Thyroid gland (tissue), 4 donors: ENCODE measurements at regions of chr14 and their contacts with region 1.

Region 1: DNA sequence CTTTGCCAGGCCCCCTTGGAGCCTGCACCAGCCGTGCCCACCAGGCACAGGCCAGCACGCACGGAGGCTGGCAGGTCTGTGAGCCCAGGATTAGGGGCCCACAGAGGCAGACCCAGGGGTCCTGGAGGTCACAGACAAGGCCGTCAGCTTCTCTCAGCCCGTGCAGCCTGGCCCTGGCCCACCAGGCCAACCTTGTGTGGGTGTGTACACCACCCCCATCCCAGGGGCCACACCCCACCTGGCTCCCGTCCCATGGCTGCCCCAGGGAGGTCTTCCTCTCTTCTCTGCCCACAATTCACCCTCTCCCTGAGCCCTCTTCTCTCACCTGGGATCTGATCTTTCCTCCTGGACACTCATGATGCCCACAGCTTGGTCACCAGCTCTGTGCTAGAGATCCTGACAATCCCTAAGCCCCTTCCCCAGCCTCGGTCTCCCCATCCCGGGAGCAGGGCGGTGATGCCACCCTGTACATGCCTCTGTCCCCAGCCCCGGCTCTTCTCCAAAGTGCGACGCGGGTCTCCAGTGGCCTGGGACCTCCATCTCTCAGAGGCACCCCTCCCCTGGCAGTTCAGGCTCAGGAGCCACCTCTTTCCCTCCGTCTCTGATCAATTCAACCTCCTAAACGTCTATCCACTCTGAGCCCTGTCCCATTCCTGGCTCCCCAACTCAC is 31.1 kb upstream of the GPR132 start:
- DNase-seq: no peak
- H3K4me3 ChIP-seq: no peak overlapping the region
- H3K27ac ChIP-seq: no peak overlapping the region
- H3K4me1 ChIP-seq: peaks cover 25 to 27% of the 10 kb centered on the region in 2 donors
- H3K27me3 ChIP-seq: no peaks in the 10 kb centered on the region
- CTCF ChIP-seq: no peak
- POLR2A ChIP-seq: no peak

Region 2: DNA sequence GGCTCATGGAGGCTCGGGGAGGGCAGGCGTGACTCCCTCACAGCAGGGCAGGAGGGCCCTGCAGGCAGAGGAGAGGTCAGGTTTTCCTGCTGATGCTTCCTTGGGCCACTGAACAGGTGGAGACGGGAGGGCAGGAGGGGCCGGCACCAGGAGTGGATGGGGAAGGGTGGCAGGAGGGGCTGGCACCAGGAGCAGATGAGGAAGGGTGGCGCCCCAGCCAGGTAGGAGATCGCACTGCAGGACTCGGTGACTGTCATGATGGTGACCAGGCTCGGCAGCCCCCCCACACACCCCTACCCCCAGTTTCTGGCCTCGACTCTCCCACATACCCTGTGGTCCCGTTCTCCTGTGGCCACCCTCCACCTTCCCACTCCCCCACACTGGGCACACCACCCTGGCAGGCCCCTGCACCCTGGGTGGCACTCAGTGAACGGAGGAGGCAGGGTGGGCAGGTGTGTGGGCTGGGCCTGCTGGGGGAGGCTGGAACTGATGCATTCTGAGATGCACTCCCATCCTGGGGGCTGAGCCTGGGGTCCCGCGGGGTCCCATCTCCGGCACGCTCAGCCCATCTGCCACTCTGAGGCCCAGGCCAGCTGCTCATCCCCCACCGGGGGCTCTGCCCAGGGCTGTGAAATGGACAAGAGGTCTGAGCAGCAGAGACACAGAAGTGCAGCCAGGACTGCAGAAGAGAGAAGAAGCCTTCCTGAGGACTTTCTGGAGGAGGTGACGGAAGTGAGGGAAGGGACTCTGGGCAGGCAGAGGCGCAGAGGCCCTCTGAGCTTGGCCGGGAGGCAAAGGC is 81.9 kb after region 1 on chr14:
- intact Hi-C with region 1: loop called (anchors 5 kb)
- DNase-seq: no peak
- H3K4me3 ChIP-seq: no peak overlapping the region
- H3K27ac ChIP-seq: no peak overlapping the region
- H3K4me1 ChIP-seq: peaks cover 13 to 26% of the 10 kb centered on the region in 2 donors
- H3K27me3 ChIP-seq: no peaks in the 10 kb centered on the region
- CTCF ChIP-seq: no peak
- POLR2A ChIP-seq: no peak